GM10248 (cell line): ENCODE measurements at regions of chr1 and their contacts with region 1.

Region 1: GRCh38 chr1:48082271-48082962 is 85.2 kb upstream of the TRABD2B start:
- DNase-seq: no peak
- CTCF ChIP-seq: no peak

Region 2: DNA sequence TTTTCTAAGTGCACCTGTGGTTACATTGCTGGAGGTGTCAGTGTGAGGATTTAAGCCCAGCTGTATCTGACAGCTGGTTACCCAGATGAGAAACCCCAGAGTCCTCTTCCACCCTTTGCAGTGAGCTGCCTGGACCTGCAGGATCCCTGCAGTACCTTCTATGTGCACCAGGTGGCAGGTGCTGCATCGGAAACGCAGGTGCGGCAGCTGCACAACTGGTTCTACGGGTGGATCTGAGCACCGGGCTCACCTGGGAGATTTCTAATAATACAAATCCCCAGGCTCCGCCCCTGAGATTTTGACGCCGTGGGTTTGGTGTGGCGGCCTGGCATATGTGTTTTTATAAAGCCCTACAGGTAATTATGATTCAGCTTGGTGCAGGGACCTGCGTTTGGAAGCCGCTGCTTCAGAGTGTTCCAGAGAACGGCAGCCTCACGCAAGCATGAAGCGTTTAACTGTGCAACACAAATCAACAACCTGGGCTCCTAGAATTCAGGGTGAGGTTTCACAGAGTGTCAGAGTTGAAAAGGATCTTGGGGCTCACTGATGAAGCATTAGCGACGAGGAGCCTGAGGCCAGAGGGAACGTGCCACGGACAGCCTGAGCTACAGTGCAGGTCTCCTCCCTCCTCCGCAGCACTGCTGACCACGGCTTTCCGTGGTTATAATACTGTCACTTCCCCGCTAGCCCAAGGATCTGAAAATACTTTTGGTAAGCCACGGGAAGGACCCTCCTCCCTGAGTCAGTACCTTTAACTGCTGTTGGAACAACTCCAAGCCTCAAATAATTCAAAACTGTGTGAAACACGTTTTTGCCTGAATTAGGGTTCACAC is 11.5 kb after region 1 on chr1:
- CTCF ChIA-PET with region 1: interaction called, 11 read pairs
- POLR2A ChIA-PET with region 1: no interaction called
- DNase-seq: peak; percentile 78
- CTCF ChIP-seq: peak; percentile 82